Esophagus muscularis mucosa (tissue), 4 donors: ENCODE measurements at regions of chrX and their contacts with region 1.

Region 1: GRCh38 chrX:22748093-22748999 is 251.4 kb upstream of the DDX53 start:
- DNase-seq: no peak
- H3K4me3 ChIP-seq: no peak overlapping the region
- H3K27ac ChIP-seq: no peak overlapping the region
- H3K4me1 ChIP-seq: no peaks in the 10 kb centered on the region
- H3K27me3 ChIP-seq: no peaks in the 10 kb centered on the region
- CTCF ChIP-seq: peak; percentile 58 to 65 (median 65)
- EP300 ChIP-seq: no peak
- POLR2A ChIP-seq: no peak

Region 2: DNA sequence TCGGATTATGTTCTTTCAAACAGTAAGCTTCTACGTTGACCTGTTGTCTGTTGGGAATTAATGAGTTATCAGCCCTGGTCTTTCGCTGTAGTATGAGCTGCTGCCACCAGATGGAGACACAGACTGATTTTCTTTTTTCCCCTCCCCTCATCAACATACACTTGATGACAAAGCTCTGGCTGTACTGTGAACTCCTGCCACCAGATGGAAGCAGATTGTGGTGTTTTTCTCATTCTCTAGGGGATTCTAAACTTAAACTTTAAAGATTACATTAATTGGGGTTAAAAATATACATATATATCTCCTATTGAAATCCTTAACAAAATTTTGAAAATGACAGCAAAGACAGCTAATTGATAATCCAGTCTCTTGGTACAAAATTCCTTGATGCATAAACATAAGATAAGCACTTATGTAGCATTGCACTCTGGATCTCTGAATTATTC is 763.0 kb before region 1 on chrX:
- intact Hi-C with region 1: loop called (anchors 10 kb)
- DNase-seq: no peak
- H3K4me3 ChIP-seq: no peak overlapping the region
- H3K27ac ChIP-seq: no peak overlapping the region
- H3K4me1 ChIP-seq: peaks cover 0 to 7% (median 2%) of the 10 kb centered on the region in 4 donors
- H3K27me3 ChIP-seq: no peaks in the 10 kb centered on the region
- CTCF ChIP-seq: peak; percentile 82 to 96 (median 92)
- EP300 ChIP-seq: no peak
- POLR2A ChIP-seq: no peak

Region 3: GRCh38 chrX:22135994-22136684 is 612.2 kb before region 1 on chrX:
- intact Hi-C with region 1: loop called (anchors 2 kb)
- DNase-seq: no peak
- H3K4me3 ChIP-seq: peak overlapping the region in 1 of 4 donors; percentile 3
- H3K27ac ChIP-seq: peak overlapping the region; percentile 58 to 80 (median 70)
- H3K4me1 ChIP-seq: peaks cover 0 to 37% (median 34%) of the 10 kb centered on the region in 4 donors
- H3K27me3 ChIP-seq: no peaks in the 10 kb centered on the region
- CTCF ChIP-seq: peak; percentile 61 to 81 (median 68)
- EP300 ChIP-seq: no peak
- POLR2A ChIP-seq: no peak

Region 4: DNA sequence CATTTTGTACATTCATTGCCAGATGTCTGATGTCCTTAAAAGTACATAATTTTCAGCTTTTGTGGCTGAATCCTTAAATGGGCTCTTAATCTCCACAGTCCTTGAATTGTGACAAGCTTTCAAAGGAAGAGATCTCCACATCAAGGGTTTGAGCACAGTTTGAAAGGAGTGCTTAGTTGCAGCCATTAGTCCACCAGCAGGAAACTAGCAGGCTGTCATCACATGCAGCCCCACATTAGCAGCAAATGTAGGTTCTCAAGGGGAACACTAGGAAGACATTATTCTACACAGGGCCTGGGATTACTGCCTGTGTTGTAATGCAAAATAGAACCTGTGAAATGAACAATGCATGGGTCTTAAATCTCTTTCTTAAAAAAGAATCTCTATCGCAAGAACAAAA is 302.5 kb before region 1 on chrX:
- intact Hi-C with region 1: no loop called
- DNase-seq: no peak
- H3K4me3 ChIP-seq: no peak overlapping the region
- H3K27ac ChIP-seq: no peak overlapping the region
- H3K4me1 ChIP-seq: no peaks in the 10 kb centered on the region
- H3K27me3 ChIP-seq: no peaks in the 10 kb centered on the region
- CTCF ChIP-seq: no peak
- EP300 ChIP-seq: no peak
- POLR2A ChIP-seq: no peak

Region 5: GRCh38 chrX:24054182-24055042 is 1306.1 kb after region 1 on chrX and contains the start of gene EIF2S3:
- intact Hi-C with region 1: no loop called
- DNase-seq: peak; percentile 94
- H3K4me3 ChIP-seq: peak within 1 kb of the TSS in 3 of 4 donors; percentile 69 to 87 (median 70)
- H3K27ac ChIP-seq: peak within 1 kb of the TSS; percentile 85 to 90 (median 89)
- H3K4me1 ChIP-seq: peaks cover 0 to 6% (median 2%) of the 10 kb centered on the region in 4 donors
- H3K27me3 ChIP-seq: no peaks in the 10 kb centered on the region
- CTCF ChIP-seq: peak; percentile 55 to 63 (median 56)
- EP300 ChIP-seq: no peak
- POLR2A ChIP-seq: peak; percentile 38
- total RNA-seq, gene EIF2S3: 116 to 159 (median 126) TPM